ENCODE measurements at regions of chr15 and their contacts with region 1.

Region 1: GRCh38 chr15:64651573-64652260 is 123.7 kb downstream of the RBPMS2 start:
- DNase-seq: peak in 1 of 2 experiments; percentile 10
- H3K4me3 ChIP-seq: no peak overlapping the region
- H3K27ac ChIP-seq: no peak overlapping the region
- H3K4me1 ChIP-seq: peaks cover 3 to 5% (median 3%) of the 10 kb centered on the region in 4 experiments; a peak in 4 of 7 replicates
- H3K27me3 ChIP-seq: no peaks in the 10 kb centered on the region
- CTCF ChIP-seq: no peak
- EP300 ChIP-seq: no peak
- POLR2A ChIP-seq: no peak
- RAD21 ChIP-seq: no peak

Region 2: DNA sequence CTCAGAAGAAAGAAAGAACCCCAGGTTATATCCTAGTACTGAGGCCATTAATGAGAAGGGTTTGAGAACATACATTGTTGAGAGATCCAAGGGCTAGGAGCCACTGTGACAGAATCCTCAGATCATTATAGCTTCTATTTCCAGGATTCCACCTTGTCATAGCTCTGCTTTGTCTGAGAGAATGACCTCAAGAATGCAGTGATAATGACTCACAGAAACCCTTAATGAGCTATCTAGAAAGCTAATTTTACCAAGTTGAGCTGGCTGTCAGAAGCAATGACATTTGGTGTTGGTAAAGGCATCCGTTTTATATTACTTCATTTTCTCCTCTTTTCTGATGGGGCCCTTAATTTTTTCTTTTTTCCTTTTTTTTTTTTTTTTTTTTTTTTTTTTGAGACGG is 253.1 kb before region 1 on chr15:
- CTCF ChIA-PET with region 1: no interaction called
- POLR2A ChIA-PET with region 1: no interaction called
- DNase-seq: no peak
- H3K4me3 ChIP-seq: no peak overlapping the region
- H3K27ac ChIP-seq: no peak overlapping the region
- H3K4me1 ChIP-seq: no peaks in the 10 kb centered on the region
- H3K27me3 ChIP-seq: no peaks in the 10 kb centered on the region
- CTCF ChIP-seq: no peak
- EP300 ChIP-seq: no peak
- POLR2A ChIP-seq: no peak
- RAD21 ChIP-seq: no peak

Region 3: DNA sequence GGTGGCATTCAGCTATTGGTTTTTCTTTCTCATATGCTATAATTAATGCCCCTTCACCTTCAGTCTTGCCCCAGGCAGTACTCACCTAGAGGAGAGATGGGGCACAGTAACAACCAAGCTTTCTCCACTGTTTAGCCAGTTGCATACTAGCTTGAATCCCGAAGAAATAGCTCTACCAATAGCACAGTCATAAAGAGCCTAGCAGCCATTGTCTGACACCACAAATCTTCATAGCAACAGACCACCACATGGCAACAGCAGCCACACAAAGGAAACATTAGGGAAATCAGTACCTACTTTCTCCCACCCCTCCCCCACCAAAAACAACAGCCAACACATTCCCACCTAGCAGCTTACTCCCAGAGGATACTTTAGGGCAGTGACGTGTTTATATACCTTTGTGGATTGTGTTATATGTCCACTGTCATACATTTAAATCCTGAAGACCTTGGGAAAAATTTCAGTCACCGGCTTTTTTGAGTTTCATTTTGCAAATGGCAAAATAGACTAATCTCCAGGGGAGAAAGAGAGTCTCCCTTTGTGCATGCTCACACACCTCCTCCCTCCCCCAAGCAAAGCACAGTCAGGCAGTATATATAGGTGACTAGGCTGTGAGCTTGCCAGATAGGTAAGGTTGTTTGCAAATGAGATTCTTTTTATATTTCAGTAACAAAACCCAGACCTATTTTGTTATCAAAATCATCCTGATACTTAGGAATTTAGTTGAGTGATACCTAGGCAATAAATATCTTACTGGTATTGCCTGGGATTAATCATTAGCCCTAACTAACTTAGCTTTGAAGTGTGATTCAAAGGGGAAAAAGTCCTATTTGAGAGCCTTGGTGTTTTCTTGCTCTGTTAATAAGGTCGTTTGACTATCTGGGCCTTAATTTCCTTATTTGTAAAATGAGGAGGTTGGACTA is 16.9 kb before region 1 on chr15:
- CTCF ChIA-PET with region 1: interaction called, 13 read pairs
- POLR2A ChIA-PET with region 1: interaction called, 25 read pairs
- DNase-seq: peak; percentile 38 to 50
- H3K4me3 ChIP-seq: peak overlapping the region in 2 of 4 experiments; percentile 14 to 46; a peak in 3 of 8 replicates
- H3K27ac ChIP-seq: peak overlapping the region; percentile 84
- H3K4me1 ChIP-seq: peaks cover 9 to 21% (median 17%) of the 10 kb centered on the region in 4 experiments; a peak in 6 of 7 replicates
- H3K27me3 ChIP-seq: no peaks in the 10 kb centered on the region
- CTCF ChIP-seq: no peak
- EP300 ChIP-seq: peak; percentile 2 to 96; a peak in 2 of 3 replicates
- POLR2A ChIP-seq: peak; percentile 32 to 64; a peak in 2 of 3 replicates
- RAD21 ChIP-seq: no peak

Region 4: GRCh38 chr15:64667736-64668161 is 16.0 kb after region 1 on chr15:
- CTCF ChIA-PET with region 1: interaction called, 15 read pairs
- POLR2A ChIA-PET with region 1: interaction called, 4 read pairs
- DNase-seq: no peak
- H3K4me3 ChIP-seq: peak overlapping the region in 1 of 4 experiments; percentile 1; a peak in 1 of 8 replicates
- H3K27ac ChIP-seq: no peak overlapping the region
- H3K4me1 ChIP-seq: peaks cover 0 to 6% (median 5%) of the 10 kb centered on the region in 4 experiments; a peak in 4 of 7 replicates
- H3K27me3 ChIP-seq: no peaks in the 10 kb centered on the region
- CTCF ChIP-seq: no peak
- EP300 ChIP-seq: no peak
- POLR2A ChIP-seq: no peak
- RAD21 ChIP-seq: no peak

Region 5: GRCh38 chr15:64975390-64975789 is 323.7 kb after region 1 on chr15:
- CTCF ChIA-PET with region 1: no interaction called
- POLR2A ChIA-PET with region 1: no interaction called
- DNase-seq: no peak
- H3K4me3 ChIP-seq: no peak overlapping the region
- H3K27ac ChIP-seq: no peak overlapping the region
- H3K4me1 ChIP-seq: peaks cover 3 to 6% (median 4%) of the 10 kb centered on the region in 4 experiments; a peak in 5 of 7 replicates
- H3K27me3 ChIP-seq: no peaks in the 10 kb centered on the region
- CTCF ChIP-seq: no peak
- EP300 ChIP-seq: no peak
- POLR2A ChIP-seq: no peak
- RAD21 ChIP-seq: no peak